ENCODE measurements at regions of chr3 and their contacts with region 1.

Region 1: DNA sequence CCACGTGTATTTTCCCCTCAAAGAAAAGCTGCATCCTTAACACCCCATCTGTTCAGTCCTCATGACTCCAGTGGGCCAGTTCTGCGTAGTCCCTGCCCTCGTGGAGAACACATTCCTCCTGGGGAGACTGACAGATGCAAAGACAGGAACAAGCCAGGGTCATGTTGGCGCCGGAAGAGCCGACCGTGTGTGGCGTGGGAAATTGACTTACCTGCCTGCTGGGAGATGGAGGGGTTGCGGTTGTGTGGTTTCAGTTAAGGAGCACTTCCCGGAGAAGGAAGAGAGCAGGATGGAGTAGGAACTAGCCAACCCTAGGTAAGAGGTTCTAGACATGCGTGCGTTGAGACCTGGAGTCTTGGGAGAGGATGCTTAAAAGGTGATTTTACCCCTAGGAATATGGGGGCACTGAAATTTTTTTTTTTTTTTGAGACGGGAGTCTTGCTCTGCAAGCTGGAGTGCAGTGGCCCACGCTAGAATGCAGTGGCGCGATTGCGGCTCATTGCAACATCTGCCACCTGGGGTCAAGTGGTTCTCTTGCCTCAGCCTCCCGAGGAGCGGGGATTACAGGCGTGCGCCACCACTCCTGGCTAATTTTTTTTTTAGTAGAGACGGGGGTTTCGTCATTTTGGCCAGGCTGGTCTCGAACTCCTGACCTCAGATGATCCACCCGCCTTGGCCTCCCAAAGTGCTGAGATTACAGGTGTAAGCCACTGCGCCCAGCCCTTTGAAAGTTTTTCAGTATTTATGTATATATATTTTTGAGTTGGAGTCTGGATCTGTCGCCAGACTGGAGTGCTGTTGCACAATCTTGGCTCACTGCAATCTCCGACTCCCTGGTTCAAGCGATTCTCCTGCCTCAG is 1.4 kb downstream of the VHL start:
- DNase-seq: peak in 2 of 9 donors; percentile 11 to 12
- ATAC-seq: no peak
- H3K4me3 ChIP-seq: peak overlapping the region; percentile 87
- H3K4me3 Mint-ChIP-seq: peak overlapping the region; percentile 85 to 98 (median 96)
- H3K27ac ChIP-seq: peak overlapping the region; percentile 95
- H3K27ac Mint-ChIP-seq: peak overlapping the region; percentile 38 to 98 (median 94)
- H3K4me1 ChIP-seq: peaks cover 10 to 12% of the 10 kb centered on the region in 2 donors
- H3K4me1 Mint-ChIP-seq: peaks cover 14 to 48% (median 37%) of the 10 kb centered on the region in 7 donors
- H3K27me3 ChIP-seq: no peaks in the 10 kb centered on the region
- H3K27me3 Mint-ChIP-seq: no peaks in the 10 kb centered on the region

Region 2: DNA sequence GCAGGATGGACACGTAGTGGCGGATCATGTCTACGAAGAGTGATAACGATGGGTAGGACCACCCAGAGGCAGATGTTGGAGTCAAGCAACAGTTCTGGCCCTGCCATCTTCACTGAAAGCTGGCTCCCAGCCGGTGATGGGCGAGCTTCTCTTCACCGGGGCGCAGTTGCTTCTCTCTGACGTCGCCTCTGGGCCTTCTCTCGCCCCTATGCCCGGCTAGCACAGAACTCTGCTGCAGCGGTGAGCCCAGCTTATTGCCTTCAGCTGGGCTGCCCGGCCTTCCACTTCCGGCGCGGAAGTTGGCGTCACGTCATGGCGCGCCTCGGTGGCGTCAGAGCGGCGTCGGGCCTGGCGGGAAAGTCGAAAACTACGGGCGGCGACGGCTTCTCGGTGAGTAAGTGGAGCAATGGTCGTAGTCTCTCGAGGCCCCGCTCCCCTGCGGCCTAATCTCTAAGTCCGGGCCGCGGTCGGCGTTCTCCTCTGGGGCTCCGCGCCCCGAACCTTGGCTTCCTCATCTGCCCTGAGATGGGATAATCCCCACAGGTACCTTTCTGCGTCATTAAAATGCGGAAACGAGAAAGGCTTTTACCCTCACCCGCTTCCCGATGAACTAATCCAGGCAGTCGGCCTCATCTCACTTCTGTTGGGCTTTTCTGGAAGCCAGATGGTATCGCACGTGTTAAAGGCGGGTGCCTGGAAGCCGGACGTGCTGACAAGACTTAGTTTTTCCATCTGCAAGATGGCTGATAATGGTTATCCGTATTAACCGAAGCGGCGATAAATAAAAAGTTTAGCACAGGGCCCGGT is 116.7 kb before region 1 on chr3 and contains the start of gene FANCD2:
- CTCF ChIA-PET with region 1: no interaction called
- POLR2A ChIA-PET with region 1: no interaction called
- intact Hi-C with region 1: loop called (anchors 5 to 10 kb)
- DNase-seq: peak; percentile 88 to 99 (median 94)
- ATAC-seq: peak; percentile 95
- H3K4me3 ChIP-seq: peak within 1 kb of the TSS; percentile 96
- H3K4me3 Mint-ChIP-seq: peak within 1 kb of the TSS; percentile 93 to 99 (median 96)
- H3K27ac ChIP-seq: peak within 1 kb of the TSS; percentile 89
- H3K27ac Mint-ChIP-seq: peak within 1 kb of the TSS; percentile 86 to 98 (median 97)
- H3K4me1 ChIP-seq: peaks cover 11 to 13% of the 10 kb centered on the region in 2 donors
- H3K4me1 Mint-ChIP-seq: peaks cover 0 to 45% (median 29%) of the 10 kb centered on the region in 7 donors
- H3K27me3 ChIP-seq: no peaks in the 10 kb centered on the region
- H3K27me3 Mint-ChIP-seq: no peaks in the 10 kb centered on the region
- total RNA-seq, gene FANCD2: 18.3 to 41.5 (median 34.1) TPM

Region 3: DNA sequence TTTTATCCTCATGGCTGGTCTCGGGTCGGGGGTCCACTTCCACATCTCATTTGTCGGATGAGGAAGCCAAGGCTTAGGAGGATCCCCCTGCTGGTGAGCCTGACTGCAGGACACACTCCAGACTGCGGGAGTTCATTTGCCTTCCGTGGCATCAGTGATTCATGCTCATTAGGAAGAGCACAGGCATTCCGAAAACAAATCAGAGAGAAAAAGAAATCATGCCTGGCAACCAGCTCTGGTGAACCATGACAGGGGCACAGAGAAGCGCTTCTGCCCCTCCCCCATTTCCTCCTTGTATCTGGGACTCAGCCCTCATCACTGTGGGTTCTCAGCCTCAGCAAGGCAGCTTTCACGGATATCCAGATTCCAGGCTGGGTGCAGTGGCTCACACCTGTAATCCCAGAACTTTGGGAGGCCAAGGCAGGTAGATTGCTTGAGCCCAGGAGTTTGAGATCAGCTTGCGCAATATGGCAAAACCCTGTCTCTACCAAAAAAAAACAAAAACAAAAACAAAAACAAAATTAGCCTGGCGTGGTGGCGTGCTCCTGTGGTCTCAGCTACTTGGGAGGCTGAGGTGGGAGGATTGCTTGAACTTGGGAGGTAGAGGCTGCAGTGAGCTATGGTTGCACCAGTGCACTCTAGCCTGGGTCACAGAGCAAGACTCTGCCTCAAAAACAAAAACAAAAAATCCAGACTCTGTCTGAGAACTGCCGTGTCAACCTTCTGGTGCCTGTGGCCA is 50.2 kb after region 1 on chr3:
- CTCF ChIA-PET with region 1: no interaction called
- POLR2A ChIA-PET with region 1: interaction called, 7 read pairs
- intact Hi-C with region 1: loop called in 1 of 2 experiments (anchors 2 kb)
- DNase-seq: peak in 8 of 9 donors; percentile 35 to 68 (median 62)
- ATAC-seq: peak; percentile 24
- H3K4me3 ChIP-seq: peak overlapping the region; percentile 34
- H3K4me3 Mint-ChIP-seq: peak overlapping the region; percentile 70 to 90 (median 81)
- H3K27ac ChIP-seq: peak overlapping the region; percentile 75
- H3K27ac Mint-ChIP-seq: peak overlapping the region; percentile 90 to 98 (median 97)
- H3K4me1 ChIP-seq: peaks cover 78 to 86% of the 10 kb centered on the region in 2 donors
- H3K4me1 Mint-ChIP-seq: peaks cover 54 to 92% (median 85%) of the 10 kb centered on the region in 7 donors
- H3K27me3 ChIP-seq: no peaks in the 10 kb centered on the region
- H3K27me3 Mint-ChIP-seq: no peaks in the 10 kb centered on the region

Region 4: DNA sequence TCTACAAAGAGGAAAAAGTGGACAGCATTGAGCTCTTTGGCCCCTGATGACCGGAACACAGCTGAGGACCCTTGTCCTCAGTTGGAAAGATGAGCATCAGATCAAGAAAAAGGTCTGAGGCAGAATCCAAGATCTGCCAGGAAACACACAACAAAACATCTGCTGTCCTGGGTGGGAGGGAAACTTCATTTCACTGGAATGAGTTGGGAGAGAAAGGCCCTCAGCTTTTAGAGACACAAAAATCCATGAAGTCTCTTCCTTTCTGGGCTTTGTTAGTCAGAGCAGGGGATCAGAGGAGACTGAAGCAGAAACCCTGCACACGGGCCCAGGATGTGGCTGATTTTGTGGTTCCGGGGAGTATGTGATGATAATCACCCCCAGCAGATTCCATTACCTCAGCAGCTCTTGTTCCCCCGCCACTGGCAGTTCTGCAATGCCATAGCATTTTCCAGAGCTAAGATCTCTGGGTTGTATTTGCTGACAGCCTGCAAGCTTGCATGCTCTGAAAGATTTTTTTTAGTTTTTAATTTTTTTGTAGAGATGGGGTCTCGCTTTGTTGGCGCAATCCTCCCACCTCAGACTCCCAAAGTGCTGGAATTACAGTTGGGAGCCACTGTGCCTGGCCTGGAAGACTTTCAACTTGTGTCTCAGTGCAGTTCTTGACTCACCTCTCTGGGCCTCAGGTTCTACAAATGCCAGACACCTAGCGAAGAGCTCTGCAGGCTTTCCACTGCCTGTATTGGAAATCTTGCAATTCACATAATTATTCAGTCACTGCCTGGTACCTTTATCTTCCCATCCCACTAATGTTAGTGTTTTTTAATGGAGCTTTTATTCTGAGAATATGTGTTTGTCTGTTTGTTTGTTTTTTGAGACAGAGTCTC is 99.5 kb after region 1 on chr3:
- CTCF ChIA-PET with region 1: no interaction called
- POLR2A ChIA-PET with region 1: interaction called, 3 read pairs
- intact Hi-C with region 1: loop called in 1 of 2 experiments (anchors 1 kb)
- DNase-seq: peak; percentile 20 to 93 (median 84)
- ATAC-seq: peak; percentile 98
- H3K4me3 ChIP-seq: peak overlapping the region; percentile 13
- H3K4me3 Mint-ChIP-seq: peak overlapping the region; percentile 75 to 82 (median 77)
- H3K27ac ChIP-seq: peak overlapping the region; percentile 71
- H3K27ac Mint-ChIP-seq: peak overlapping the region; percentile 86 to 96 (median 93)
- H3K4me1 ChIP-seq: peaks cover 33 to 43% of the 10 kb centered on the region in 2 donors
- H3K4me1 Mint-ChIP-seq: peaks cover 40 to 60% (median 54%) of the 10 kb centered on the region in 7 donors
- H3K27me3 ChIP-seq: no peaks in the 10 kb centered on the region
- H3K27me3 Mint-ChIP-seq: no peaks in the 10 kb centered on the region

Region 5: GRCh38 chr3:10263646-10264363 is 120.9 kb after region 1 on chr3:
- CTCF ChIA-PET with region 1: no interaction called
- POLR2A ChIA-PET with region 1: interaction called, 4 read pairs
- intact Hi-C with region 1: loop called in 1 of 2 experiments (anchors 1 kb)
- DNase-seq: peak; percentile 33 to 76 (median 71)
- ATAC-seq: peak; percentile 96
- H3K4me3 ChIP-seq: peak overlapping the region; percentile 47
- H3K4me3 Mint-ChIP-seq: peak overlapping the region; percentile 68 to 87 (median 77)
- H3K27ac ChIP-seq: peak overlapping the region; percentile 73
- H3K27ac Mint-ChIP-seq: peak overlapping the region; percentile 82 to 97 (median 91)
- H3K4me1 ChIP-seq: peaks cover 36 to 62% of the 10 kb centered on the region in 2 donors
- H3K4me1 Mint-ChIP-seq: peaks cover 50 to 97% (median 80%) of the 10 kb centered on the region in 7 donors
- H3K27me3 ChIP-seq: no peaks in the 10 kb centered on the region
- H3K27me3 Mint-ChIP-seq: no peaks in the 10 kb centered on the region

Measured in naive thymus-derived CD4-positive, alpha-beta T cell (primary cell).